Right ventricle myocardium superior (tissue), 1 donor: ENCODE measurements at regions of chr6 and their contacts with region 1.

Region 1: GRCh38 chr6:165439928-165440554 is 130.6 kb upstream of the C6orf118 start:
- DNase-seq: no peak
- ATAC-seq: peak; percentile 70

Region 2: DNA sequence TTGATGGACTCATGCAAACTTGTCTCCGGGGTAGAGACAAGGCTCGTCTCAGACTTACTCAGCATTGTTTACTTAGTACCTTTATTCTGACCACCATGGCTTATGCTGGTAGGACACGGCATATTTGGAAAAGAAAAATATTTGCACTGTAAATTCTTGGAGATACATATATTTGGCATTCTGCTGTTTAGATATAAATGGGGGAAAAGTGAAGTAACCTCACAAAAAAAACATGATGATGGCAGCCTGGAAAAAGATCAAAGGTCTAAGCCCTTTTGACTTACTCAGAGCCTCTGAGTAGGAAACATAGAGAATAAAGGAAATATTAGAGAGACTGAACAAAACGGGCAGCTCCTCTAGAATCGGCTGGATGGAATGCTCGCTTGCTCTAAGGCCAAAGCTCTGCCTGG is 190.5 kb after region 1 on chr6:
- intact Hi-C with region 1: no loop called
- DNase-seq: no peak
- ATAC-seq: no peak

Region 3: DNA sequence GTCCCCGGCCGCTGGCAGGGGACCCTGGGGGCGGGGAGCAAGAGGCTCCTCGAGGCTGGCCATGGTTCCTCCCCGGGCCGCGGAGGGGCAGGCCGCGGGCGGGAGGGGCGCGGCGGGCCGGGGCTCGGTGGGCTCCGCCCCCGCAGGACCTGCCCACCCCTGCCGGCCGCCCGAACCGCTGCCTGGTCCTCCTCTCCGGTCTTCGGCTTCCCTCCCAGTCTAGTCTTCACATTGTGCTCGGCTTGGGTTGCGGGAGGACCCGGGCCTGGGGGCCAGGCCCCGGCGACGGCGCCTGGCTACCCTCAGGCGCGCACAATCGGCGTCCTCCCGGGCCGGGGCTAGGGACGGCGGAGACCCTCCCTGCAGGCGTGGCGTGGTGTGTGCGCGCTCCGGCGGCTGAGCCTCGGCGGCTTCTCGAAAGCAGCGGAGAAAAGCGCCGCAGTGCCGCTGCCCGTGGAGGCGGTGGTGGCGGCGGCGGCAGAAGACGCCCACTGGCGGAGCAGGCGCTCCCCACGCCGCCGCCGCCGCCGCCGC is 222.8 kb after region 1 on chr6 and contains the start of gene PDE10A:
- intact Hi-C with region 1: loop called (anchors 10 kb)
- DNase-seq: peak; percentile 86
- ATAC-seq: peak; percentile 76
- total RNA-seq, gene PDE10A: 11.6 TPM

Region 4: DNA sequence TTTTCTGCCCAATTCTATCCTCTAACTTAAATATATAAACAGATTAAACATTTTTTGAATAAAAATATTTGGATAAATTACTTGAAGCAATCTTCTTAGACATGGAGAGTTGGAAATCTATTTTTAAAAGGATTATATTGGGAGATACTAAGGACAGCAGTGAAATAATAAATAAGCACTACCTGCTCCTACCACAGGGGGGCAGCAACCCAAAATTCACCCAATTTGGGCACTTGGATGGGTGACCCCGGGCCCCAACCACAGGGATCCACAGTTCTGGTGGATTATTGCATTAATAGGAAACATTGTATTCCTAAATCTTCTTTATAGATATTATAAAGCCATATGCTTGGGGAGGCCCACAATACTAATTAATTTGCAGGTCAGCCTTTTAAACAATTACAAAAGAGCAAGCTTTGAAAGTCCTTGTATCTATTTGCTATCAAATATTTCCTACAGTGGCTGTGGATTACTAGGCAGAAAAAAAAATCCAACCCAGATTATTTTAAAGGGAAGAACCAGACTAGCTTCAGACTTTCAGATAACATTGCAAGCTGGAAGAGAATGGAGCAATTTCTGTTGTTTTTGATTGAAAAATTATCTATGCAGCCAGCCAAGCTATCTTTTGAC is 289.4 kb after region 1 on chr6:
- intact Hi-C with region 1: loop called (anchors 5 kb)
- DNase-seq: peak; percentile 52
- ATAC-seq: peak; percentile 76

Region 5: DNA sequence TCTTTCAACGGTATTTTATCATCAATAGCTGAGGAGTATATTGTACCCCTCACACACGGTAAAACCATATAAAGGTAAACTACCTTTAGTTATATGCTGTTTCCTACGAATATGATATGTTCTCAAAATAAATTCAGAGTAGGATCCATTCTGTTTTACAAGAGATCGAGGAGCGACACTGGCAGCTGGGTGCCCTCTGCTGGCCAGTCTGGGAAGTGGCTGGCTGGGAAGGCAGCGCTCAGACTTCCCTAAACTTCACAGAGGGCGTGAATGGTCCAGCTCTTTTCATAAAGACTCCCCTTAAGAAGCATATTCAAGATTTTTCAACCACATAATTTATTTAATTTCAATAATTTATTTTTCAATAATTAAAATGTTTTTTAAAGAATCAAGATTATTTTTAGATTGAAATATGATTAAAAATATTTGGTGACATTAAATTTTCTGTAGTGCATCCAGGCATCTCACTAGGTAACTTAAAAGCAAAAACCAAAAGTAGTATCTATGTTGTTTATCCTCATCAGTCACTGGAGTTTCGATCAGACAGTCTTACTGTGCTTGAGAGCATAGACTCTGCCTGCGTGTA is 410.5 kb after region 1 on chr6:
- intact Hi-C with region 1: loop called (anchors 2 kb)
- DNase-seq: peak; percentile 86
- ATAC-seq: peak; percentile 89